Activated T-helper 1 cell treated with anti-CD3 and anti-CD28 coated beads, Interleukin-12 subunit alpha, Interleukin-12 subunit beta, Interleukin-2, Interleukin-4 antibody, amounts not matched to agents 30 ng/mL and 10 ng/mL and 1 ng/mL, durations not matched to agents 14 hours and 24 hours and 36 hours (primary cell): ENCODE measurements at regions of chr15 and their contacts with region 1.

Region 1: GRCh38 chr15:56040081-56041035 is 46.9 kb upstream of the NEDD4 start:
- DNase-seq: no peak
- H3K4me3 Mint-ChIP-seq: no peak overlapping the region
- H3K27ac Mint-ChIP-seq: no peak overlapping the region
- H3K4me1 Mint-ChIP-seq: peaks cover 39% of the 10 kb centered on the region
- H3K27me3 Mint-ChIP-seq: no peaks in the 10 kb centered on the region

Region 2: DNA sequence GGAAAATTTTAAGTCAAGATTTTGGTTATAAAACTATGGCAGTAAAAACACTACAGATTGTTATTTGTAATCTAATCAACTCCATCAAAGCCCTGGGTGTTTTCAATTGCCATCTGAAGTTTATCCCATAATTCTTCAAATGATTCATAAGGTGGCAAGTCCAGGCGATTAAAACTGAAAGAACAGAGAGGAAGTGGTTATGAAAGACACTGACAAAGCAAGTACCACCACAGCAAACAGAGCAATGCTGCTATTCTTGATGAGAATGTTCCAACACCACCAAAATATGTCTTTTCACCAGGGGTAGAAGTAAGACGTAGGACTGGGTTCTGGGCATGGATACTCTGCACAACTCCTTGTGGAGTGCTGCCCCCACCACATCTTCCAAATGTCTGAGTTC is 210.5 kb before region 1 on chr15:
- intact Hi-C with region 1: loop called (anchors 2 kb)
- DNase-seq: no peak
- H3K4me3 Mint-ChIP-seq: peak overlapping the region; percentile 28
- H3K27ac Mint-ChIP-seq: peak overlapping the region; percentile 4
- H3K4me1 Mint-ChIP-seq: peaks cover 30% of the 10 kb centered on the region
- H3K27me3 Mint-ChIP-seq: no peaks in the 10 kb centered on the region

Region 3: GRCh38 chr15:55917881-55918296 is 122.5 kb before region 1 on chr15:
- intact Hi-C with region 1: no loop called
- DNase-seq: no peak
- H3K4me3 Mint-ChIP-seq: no peak overlapping the region
- H3K27ac Mint-ChIP-seq: no peak overlapping the region
- H3K4me1 Mint-ChIP-seq: peaks cover 6% of the 10 kb centered on the region
- H3K27me3 Mint-ChIP-seq: no peaks in the 10 kb centered on the region

Region 4: GRCh38 chr15:55993111-55993803 is 47.1 kb before region 1 on chr15 and contains the start of gene NEDD4:
- intact Hi-C with region 1: loop called (anchors 1 kb)
- DNase-seq: peak; percentile 68
- H3K4me3 Mint-ChIP-seq: peak within 1 kb of the TSS; percentile 87
- H3K27ac Mint-ChIP-seq: peak within 1 kb of the TSS; percentile 57
- H3K4me1 Mint-ChIP-seq: peaks cover 23% of the 10 kb centered on the region
- H3K27me3 Mint-ChIP-seq: peaks cover 30% of the 10 kb centered on the region
- total RNA-seq, gene NEDD4: 10.4 and 12.6 TPM in 2 replicates